ENCODE measurements at regions of chr6 and their contacts with region 1.

Region 1: GRCh38 chr6:16183187-16183664 is 54.3 kb downstream of the MYLIP start:
- DNase-seq: no peak
- H3K4me3 ChIP-seq: no peak overlapping the region
- H3K27ac ChIP-seq: no peak overlapping the region
- H3K4me1 ChIP-seq: no peaks in the 10 kb centered on the region
- H3K27me3 ChIP-seq: no peaks in the 10 kb centered on the region
- CTCF ChIP-seq: peak; percentile 68

Region 2: GRCh38 chr6:15893556-15894268 is 289.5 kb before region 1 on chr6:
- intact Hi-C with region 1: loop called (anchors 10 kb)
- DNase-seq: no peak
- H3K4me3 ChIP-seq: no peak overlapping the region
- H3K27ac ChIP-seq: no peak overlapping the region
- H3K4me1 ChIP-seq: no peaks in the 10 kb centered on the region
- H3K27me3 ChIP-seq: no peaks in the 10 kb centered on the region
- CTCF ChIP-seq: peak; percentile 41

Region 3: GRCh38 chr6:16128759-16129622 is 54.2 kb before region 1 on chr6 and contains the start of gene MYLIP:
- intact Hi-C with region 1: loop called (anchors 10 kb)
- DNase-seq: peak; percentile 99
- H3K4me3 ChIP-seq: peak within 1 kb of the TSS; percentile 91
- H3K27ac ChIP-seq: peak within 1 kb of the TSS; percentile 92
- H3K4me1 ChIP-seq: no peaks in the 10 kb centered on the region
- H3K27me3 ChIP-seq: no peaks in the 10 kb centered on the region
- CTCF ChIP-seq: peak; percentile 70
- total RNA-seq, gene MYLIP: 23.9 to 32.2 TPM

Region 4: GRCh38 chr6:16154904-16155303 is 28.3 kb before region 1 on chr6:
- intact Hi-C with region 1: no loop called
- DNase-seq: no peak
- H3K4me3 ChIP-seq: no peak overlapping the region
- H3K27ac ChIP-seq: no peak overlapping the region
- H3K4me1 ChIP-seq: no peaks in the 10 kb centered on the region
- H3K27me3 ChIP-seq: no peaks in the 10 kb centered on the region
- CTCF ChIP-seq: no peak

Measured in colonic mucosa (tissue), 4 donors.